Endothelial cell of umbilical vein (primary cell): ENCODE measurements at regions of chr19 and their contacts with region 1.

Region 1: GRCh38 chr19:4400135-4400936 is at the start of gene SH3GL1:
- DNase-seq: peak; percentile 88
- H3K4me3 ChIP-seq: peak within 1 kb of the TSS; percentile 76 to 98 (median 91)
- H3K27ac ChIP-seq: peak within 1 kb of the TSS; percentile 95
- H3K4me1 ChIP-seq: peaks cover 28% of the 10 kb centered on the region
- H3K27me3 ChIP-seq: no peaks in the 10 kb centered on the region
- CTCF ChIP-seq: peak; percentile 95 to 99
- POLR2A ChIP-seq: peak; percentile 39
- total RNA-seq, gene SH3GL1: 143 and 153 TPM in 2 replicates

Region 2: GRCh38 chr19:4246767-4247593 is 153.4 kb before region 1 on chr19 and contains the start of gene YJU2:
- CTCF ChIA-PET with region 1: no interaction called
- POLR2A ChIA-PET with region 1: no interaction called
- dilution Hi-C with region 1: no loop called
- intact Hi-C with region 1: loop called (anchors 1 kb)
- DNase-seq: peak; percentile 99
- H3K4me3 ChIP-seq: peak within 1 kb of the TSS; percentile 43 to 86 (median 75)
- H3K27ac ChIP-seq: peak within 1 kb of the TSS; percentile 97
- H3K4me1 ChIP-seq: no peaks in the 10 kb centered on the region
- H3K27me3 ChIP-seq: no peaks in the 10 kb centered on the region
- CTCF ChIP-seq: peak; percentile 44 to 56
- POLR2A ChIP-seq: peak; percentile 59
- total RNA-seq, gene YJU2: 21.5 and 23.0 TPM in 2 replicates

Region 3: DNA sequence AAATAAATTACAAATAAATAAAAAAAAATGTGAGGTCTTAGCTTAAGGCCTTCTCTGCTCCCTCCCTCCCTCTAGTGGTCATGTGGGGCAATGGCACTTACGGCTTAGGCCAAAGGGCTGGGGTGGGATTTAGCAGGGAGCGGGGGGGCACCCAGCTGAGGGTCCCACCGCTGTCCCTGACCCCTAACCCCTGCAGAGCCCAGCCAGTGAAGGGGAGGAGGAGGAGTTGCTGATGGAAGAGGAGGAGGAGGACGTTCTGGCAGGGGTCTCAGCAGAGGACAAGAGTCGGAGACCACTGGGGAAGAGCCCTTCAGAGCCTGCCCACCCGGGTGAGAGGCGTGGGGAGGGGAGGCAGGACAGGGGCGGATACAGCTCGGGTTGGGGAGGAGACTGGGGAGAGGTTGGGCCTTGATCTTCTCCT is 47.6 kb before region 1 on chr19:
- CTCF ChIA-PET with region 1: interaction called, 11 read pairs
- POLR2A ChIA-PET with region 1: no interaction called
- dilution Hi-C with region 1: no loop called
- intact Hi-C with region 1: no loop called
- DNase-seq: peak; percentile 66
- H3K4me3 ChIP-seq: no peak overlapping the region
- H3K27ac ChIP-seq: no peak overlapping the region
- H3K4me1 ChIP-seq: no peaks in the 10 kb centered on the region
- H3K27me3 ChIP-seq: no peaks in the 10 kb centered on the region
- CTCF ChIP-seq: peak; percentile 76 to 85
- POLR2A ChIP-seq: no peak

Region 4: GRCh38 chr19:4375164-4376027 is 24.9 kb before region 1 on chr19:
- CTCF ChIA-PET with region 1: interaction called, 105 read pairs
- POLR2A ChIA-PET with region 1: interaction called, 3 read pairs
- dilution Hi-C with region 1: no loop called
- intact Hi-C with region 1: loop called (anchors 1 kb)
- DNase-seq: peak; percentile 62
- H3K4me3 ChIP-seq: no peak overlapping the region
- H3K27ac ChIP-seq: peak overlapping the region; percentile 51
- H3K4me1 ChIP-seq: peaks cover 49% of the 10 kb centered on the region
- H3K27me3 ChIP-seq: no peaks in the 10 kb centered on the region
- CTCF ChIP-seq: peak; percentile 52 to 68
- POLR2A ChIP-seq: no peak

Region 5: GRCh38 chr19:4471403-4472173 is 71.3 kb after region 1 on chr19:
- CTCF ChIA-PET with region 1: interaction called, 9 read pairs
- POLR2A ChIA-PET with region 1: no interaction called
- dilution Hi-C with region 1: no loop called
- intact Hi-C with region 1: loop called (anchors 1 kb)
- DNase-seq: peak; percentile 100
- H3K4me3 ChIP-seq: peak overlapping the region; percentile 18 to 54 (median 34)
- H3K27ac ChIP-seq: peak overlapping the region; percentile 68
- H3K4me1 ChIP-seq: peaks cover 12% of the 10 kb centered on the region
- H3K27me3 ChIP-seq: no peaks in the 10 kb centered on the region
- CTCF ChIP-seq: no peak
- POLR2A ChIP-seq: peak; percentile 54

Region 6: DNA sequence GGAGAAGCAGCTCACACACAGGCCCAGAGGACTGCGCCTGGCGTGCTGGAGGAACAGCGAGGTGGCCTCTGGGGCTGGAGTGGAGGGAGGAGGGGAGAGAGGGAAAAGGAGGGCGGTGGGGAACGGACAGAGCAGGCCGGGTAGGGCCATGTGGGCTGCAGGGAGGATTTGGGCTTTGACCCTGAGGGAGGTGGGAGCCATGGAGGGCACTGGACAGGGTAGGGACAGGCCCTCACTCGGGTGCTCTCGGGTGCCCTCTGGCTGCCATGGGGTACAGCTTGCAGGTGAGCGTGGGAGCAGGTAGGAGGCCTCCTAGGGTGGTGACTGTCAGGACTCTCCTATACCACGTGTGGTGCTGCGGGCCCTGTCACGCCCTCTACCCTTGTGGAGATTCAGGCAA is 95.1 kb after region 1 on chr19:
- CTCF ChIA-PET with region 1: no interaction called
- POLR2A ChIA-PET with region 1: no interaction called
- dilution Hi-C with region 1: no loop called
- intact Hi-C with region 1: no loop called
- DNase-seq: no peak
- H3K4me3 ChIP-seq: no peak overlapping the region
- H3K27ac ChIP-seq: no peak overlapping the region
- H3K4me1 ChIP-seq: no peaks in the 10 kb centered on the region
- H3K27me3 ChIP-seq: no peaks in the 10 kb centered on the region
- CTCF ChIP-seq: no peak
- POLR2A ChIP-seq: no peak

Region 7: GRCh38 chr19:4557971-4558941 is 157.9 kb after region 1 on chr19:
- CTCF ChIA-PET with region 1: no interaction called
- POLR2A ChIA-PET with region 1: no interaction called
- dilution Hi-C with region 1: no loop called
- intact Hi-C with region 1: no loop called
- DNase-seq: peak; percentile 61
- H3K4me3 ChIP-seq: peak overlapping the region in 2 of 3 experiments; percentile 37 to 76
- H3K27ac ChIP-seq: peak overlapping the region; percentile 77
- H3K4me1 ChIP-seq: peaks cover 26% of the 10 kb centered on the region
- H3K27me3 ChIP-seq: no peaks in the 10 kb centered on the region
- CTCF ChIP-seq: peak; percentile 91 to 93
- POLR2A ChIP-seq: no peak

Region 8: GRCh38 chr19:4744451-4745174 is 344.3 kb after region 1 on chr19:
- CTCF ChIA-PET with region 1: no interaction called
- POLR2A ChIA-PET with region 1: no interaction called
- dilution Hi-C with region 1: no loop called
- intact Hi-C with region 1: no loop called
- DNase-seq: peak; percentile 51
- H3K4me3 ChIP-seq: no peak overlapping the region
- H3K27ac ChIP-seq: no peak overlapping the region
- H3K4me1 ChIP-seq: no peaks in the 10 kb centered on the region
- H3K27me3 ChIP-seq: peaks cover 0 to 5% of the 10 kb centered on the region in 2 experiments
- CTCF ChIP-seq: no peak
- POLR2A ChIP-seq: no peak